Body of pancreas (tissue), 4 donors: ENCODE measurements at regions of chr6 and their contacts with region 1.

Region 1: GRCh38 chr6:3742426-3743344 is 8.8 kb downstream of the PXDC1 start:
- DNase-seq: peak; percentile 88 to 91 (median 89)
- ATAC-seq: peak; percentile 92
- H3K4me3 ChIP-seq: no peak overlapping the region
- H3K27ac ChIP-seq: peak overlapping the region; percentile 15 to 63 (median 36)
- H3K4me1 ChIP-seq: peaks cover 18% of the 10 kb centered on the region
- H3K27me3 ChIP-seq: no peaks in the 10 kb centered on the region
- CTCF ChIP-seq: peak; percentile 88 to 98 (median 94)
- POLR2A ChIP-seq: no peak

Region 2: DNA sequence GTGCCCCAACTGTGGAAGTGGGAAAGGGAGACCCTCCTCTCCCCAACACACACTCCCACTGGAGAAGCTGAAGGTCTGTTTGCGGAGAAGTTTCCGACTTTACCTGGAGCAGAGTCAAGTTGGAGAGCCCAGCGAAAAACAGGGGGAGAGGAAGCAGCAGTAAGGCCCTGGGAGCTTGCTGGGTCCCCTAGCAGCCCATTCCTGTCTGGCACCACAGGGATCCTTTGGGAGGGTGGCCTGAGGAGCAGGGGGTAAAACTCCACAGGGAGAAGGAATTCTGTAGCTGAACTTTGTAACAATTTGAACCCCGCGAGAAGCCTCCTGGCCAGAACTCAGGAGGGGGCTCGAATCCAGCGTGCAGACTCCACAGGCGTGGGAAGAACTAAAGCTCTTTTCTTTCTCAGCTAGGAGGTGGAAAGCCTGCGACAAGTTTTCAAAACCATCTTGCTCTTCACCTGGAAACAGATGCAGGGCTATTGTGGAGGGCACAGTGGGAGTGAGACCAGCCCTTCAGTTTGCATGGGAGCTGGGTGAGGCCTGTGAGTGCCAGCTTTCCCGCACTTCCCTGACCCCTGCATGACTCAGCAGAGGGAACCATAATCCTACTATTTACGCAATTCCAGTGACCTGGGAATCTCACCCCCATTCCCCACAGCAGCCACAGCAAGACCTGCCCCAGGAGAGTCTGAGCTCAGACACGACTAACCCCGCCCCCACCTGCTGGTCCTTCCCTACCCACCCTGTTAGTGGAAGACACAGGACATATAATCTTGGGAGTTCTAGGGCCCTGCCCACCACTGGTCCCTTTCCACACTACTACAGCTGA is 865.4 kb before region 1 on chr6:
- intact Hi-C with region 1: no loop called
- DNase-seq: no peak
- ATAC-seq: no peak
- H3K4me3 ChIP-seq: no peak overlapping the region
- H3K27ac ChIP-seq: peak overlapping the region; percentile 55 to 86 (median 76)
- H3K4me1 ChIP-seq: peaks cover 22% of the 10 kb centered on the region
- H3K27me3 ChIP-seq: no peaks in the 10 kb centered on the region
- CTCF ChIP-seq: no peak
- POLR2A ChIP-seq: no peak

Region 3: GRCh38 chr6:3990692-3991501 is 248.2 kb after region 1 on chr6:
- intact Hi-C with region 1: loop called (anchors 5 kb)
- DNase-seq: peak; percentile 89 to 95 (median 92)
- ATAC-seq: peak; percentile 94
- H3K4me3 ChIP-seq: no peak overlapping the region
- H3K27ac ChIP-seq: peak overlapping the region in 3 of 4 donors; percentile 31 to 63 (median 55)
- H3K4me1 ChIP-seq: peaks cover 36% of the 10 kb centered on the region
- H3K27me3 ChIP-seq: no peaks in the 10 kb centered on the region
- CTCF ChIP-seq: peak; percentile 57 to 88 (median 84)
- POLR2A ChIP-seq: no peak

Region 4: DNA sequence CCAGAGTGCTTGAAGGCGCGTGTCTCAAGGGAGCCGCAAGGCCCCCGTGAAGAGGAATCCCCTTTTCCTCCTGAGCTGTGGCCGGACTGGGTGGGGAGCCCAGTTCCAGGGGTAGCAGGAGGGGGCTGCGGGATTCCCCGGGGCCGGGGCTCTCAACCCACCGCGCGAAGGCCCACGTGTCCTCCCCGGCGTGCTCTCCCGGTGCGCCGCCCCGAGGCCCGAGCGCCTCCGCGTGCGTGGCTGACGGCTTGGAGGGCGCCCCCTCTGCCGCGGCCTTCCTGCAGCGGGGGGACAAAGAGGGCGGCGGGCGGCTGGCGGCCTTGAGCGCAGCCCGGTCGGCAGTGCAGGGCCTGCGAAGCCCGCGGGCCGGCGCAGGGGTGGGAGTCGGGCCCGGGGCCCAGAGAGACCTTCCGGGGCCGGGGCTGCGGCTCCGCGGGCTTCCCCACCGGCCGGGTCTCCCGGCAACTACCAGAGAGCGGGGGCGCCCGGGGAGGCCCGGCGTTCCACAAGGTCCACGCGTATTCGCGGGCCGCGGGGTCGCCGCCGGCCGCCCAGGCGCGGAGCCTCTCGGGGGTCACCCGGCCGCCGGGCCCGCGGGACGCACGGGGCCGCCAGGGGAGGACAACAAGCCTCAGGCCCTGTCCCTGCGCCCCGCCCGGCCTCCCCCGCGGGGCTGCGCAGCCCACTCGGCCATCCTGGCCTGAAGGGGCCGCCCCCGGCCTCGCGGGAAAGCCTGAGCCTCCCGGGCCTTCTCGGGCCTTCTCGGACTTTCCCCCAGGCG is 336.2 kb after region 1 on chr6 and contains the start of gene FAM217A:
- intact Hi-C with region 1: no loop called
- DNase-seq: no peak
- ATAC-seq: no peak
- H3K4me3 ChIP-seq: no peak within 1 kb of the TSS
- H3K27ac ChIP-seq: no peak within 1 kb of the TSS
- H3K4me1 ChIP-seq: peaks cover 18% of the 10 kb centered on the region
- H3K27me3 ChIP-seq: no peaks in the 10 kb centered on the region
- CTCF ChIP-seq: no peak
- POLR2A ChIP-seq: no peak
- total RNA-seq, gene FAM217A: not detected